OCI-LY7 (cell line): ENCODE measurements at regions of chr17 and their contacts with region 1.

Region 1: GRCh38 chr17:19494961-19495806 is 38.5 kb upstream of the SLC47A1 start:
- DNase-seq: no peak
- H3K4me3 ChIP-seq: peak overlapping the region; percentile 50
- H3K27ac ChIP-seq: peak overlapping the region; percentile 79
- H3K4me1 ChIP-seq: peaks cover 45% of the 10 kb centered on the region
- CTCF ChIP-seq: no peak

Region 2: GRCh38 chr17:19482576-19482975 is 12.6 kb before region 1 on chr17:
- CTCF ChIA-PET with region 1: no interaction called
- POLR2A ChIA-PET with region 1: interaction called, 16 read pairs
- intact Hi-C with region 1: no loop called
- DNase-seq: no peak
- H3K4me3 ChIP-seq: no peak overlapping the region
- H3K27ac ChIP-seq: no peak overlapping the region
- H3K4me1 ChIP-seq: no peaks in the 10 kb centered on the region
- CTCF ChIP-seq: no peak